ENCODE measurements at regions of chr1 and their contacts with region 1.

Region 1: GRCh38 chr1:12177999-12178441 is 11.2 kb downstream of the TNFRSF1B start:
- DNase-seq: peak; percentile 85 to 98 (median 90)
- H3K4me3 ChIP-seq: peak overlapping the region; percentile 63
- H3K4me3 Mint-ChIP-seq: peak overlapping the region; percentile 67 to 93 (median 85)
- H3K27ac ChIP-seq: peak overlapping the region; percentile 76
- H3K27ac Mint-ChIP-seq: peak overlapping the region; percentile 97 to 100 (median 100)
- H3K4me1 ChIP-seq: peaks cover 82% of the 10 kb centered on the region
- H3K4me1 Mint-ChIP-seq: peaks cover 81 to 94% (median 84%) of the 10 kb centered on the region in 3 donors
- H3K27me3 ChIP-seq: no peaks in the 10 kb centered on the region
- H3K27me3 Mint-ChIP-seq: peaks cover 0 to 10% of the 10 kb centered on the region in 2 donors

Region 2: GRCh38 chr1:11822096-11822495 is 355.9 kb before region 1 on chr1:
- CTCF ChIA-PET with region 1: no interaction called
- POLR2A ChIA-PET with region 1: no interaction called
- DNase-seq: no peak
- H3K4me3 ChIP-seq: no peak overlapping the region
- H3K4me3 Mint-ChIP-seq: no peak overlapping the region
- H3K27ac ChIP-seq: no peak overlapping the region
- H3K27ac Mint-ChIP-seq: peak overlapping the region in 1 of 8 donors; percentile 21
- H3K4me1 ChIP-seq: no peaks in the 10 kb centered on the region
- H3K4me1 Mint-ChIP-seq: no peaks in the 10 kb centered on the region
- H3K27me3 ChIP-seq: no peaks in the 10 kb centered on the region
- H3K27me3 Mint-ChIP-seq: no peaks in the 10 kb centered on the region

Region 3: DNA sequence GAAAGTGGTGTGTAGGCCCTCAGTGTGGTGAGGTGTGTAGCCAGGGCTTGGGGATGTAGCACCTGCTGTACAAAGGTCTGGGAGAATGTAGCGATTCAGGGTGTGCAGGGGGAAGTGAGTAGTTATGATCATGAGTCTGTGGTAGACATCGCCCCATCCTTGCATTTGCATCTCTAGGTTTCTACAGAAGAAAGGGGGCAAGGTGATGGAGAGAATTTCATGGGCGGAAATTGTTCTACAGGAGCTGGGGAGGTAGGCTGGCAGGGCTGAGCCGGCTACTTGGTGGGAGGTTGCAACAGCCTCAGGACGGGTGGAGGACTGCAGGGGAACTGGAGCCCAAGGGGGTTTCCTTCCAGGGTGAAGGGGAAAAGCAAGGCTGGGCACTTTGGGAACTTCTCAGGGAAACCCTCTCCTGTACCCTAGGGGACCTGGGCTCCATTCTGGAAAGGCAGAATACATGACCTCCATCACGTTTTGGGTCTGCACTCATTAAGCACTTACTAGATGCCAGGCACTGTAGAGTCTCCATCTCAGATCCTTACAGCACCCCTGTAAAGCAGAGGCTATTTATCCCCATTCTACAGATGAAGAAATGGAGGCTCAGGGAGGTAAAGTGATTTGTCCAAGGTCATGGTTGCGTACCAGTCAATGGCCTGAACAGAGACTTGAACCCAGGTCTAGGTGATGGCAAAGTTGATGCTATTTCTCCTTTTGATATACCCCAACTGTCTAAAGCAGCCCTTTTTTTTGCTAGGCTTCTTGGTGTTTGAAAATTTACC is 25.7 kb before region 1 on chr1:
- CTCF ChIA-PET with region 1: interaction called, 24 read pairs
- POLR2A ChIA-PET with region 1: interaction called, 38 read pairs
- DNase-seq: no peak
- H3K4me3 ChIP-seq: no peak overlapping the region
- H3K4me3 Mint-ChIP-seq: peak overlapping the region; percentile 3 to 82 (median 78)
- H3K27ac ChIP-seq: peak overlapping the region; percentile 6
- H3K27ac Mint-ChIP-seq: peak overlapping the region; percentile 89 to 99 (median 98)
- H3K4me1 ChIP-seq: peaks cover 70% of the 10 kb centered on the region
- H3K4me1 Mint-ChIP-seq: peaks cover 78 to 88% (median 80%) of the 10 kb centered on the region in 3 donors
- H3K27me3 ChIP-seq: no peaks in the 10 kb centered on the region
- H3K27me3 Mint-ChIP-seq: no peaks in the 10 kb centered on the region

Region 4: GRCh38 chr1:12161662-12162458 is 16.2 kb before region 1 on chr1:
- CTCF ChIA-PET with region 1: interaction called, 13 read pairs
- POLR2A ChIA-PET with region 1: interaction called, 18 read pairs
- DNase-seq: peak in 4 of 5 donors; percentile 71 to 91 (median 78)
- H3K4me3 ChIP-seq: peak overlapping the region; percentile 46
- H3K4me3 Mint-ChIP-seq: peak overlapping the region; percentile 72 to 83 (median 76)
- H3K27ac ChIP-seq: peak overlapping the region; percentile 77
- H3K27ac Mint-ChIP-seq: peak overlapping the region; percentile 92 to 98 (median 96)
- H3K4me1 ChIP-seq: peaks cover 73% of the 10 kb centered on the region
- H3K4me1 Mint-ChIP-seq: peaks cover 73 to 87% (median 78%) of the 10 kb centered on the region in 3 donors
- H3K27me3 ChIP-seq: no peaks in the 10 kb centered on the region
- H3K27me3 Mint-ChIP-seq: no peaks in the 10 kb centered on the region

Region 5: GRCh38 chr1:12166834-12167492 is 11.1 kb before region 1 on chr1 and contains the start of gene TNFRSF1B:
- CTCF ChIA-PET with region 1: interaction called, 14 read pairs
- POLR2A ChIA-PET with region 1: interaction called, 18 read pairs
- DNase-seq: peak; percentile 49 to 78 (median 68)
- H3K4me3 ChIP-seq: peak within 1 kb of the TSS; percentile 91
- H3K4me3 Mint-ChIP-seq: peak within 1 kb of the TSS; percentile 94 to 100 (median 99)
- H3K27ac ChIP-seq: peak within 1 kb of the TSS; percentile 95
- H3K27ac Mint-ChIP-seq: peak within 1 kb of the TSS; percentile 90 to 100 (median 99)
- H3K4me1 ChIP-seq: peaks cover 67% of the 10 kb centered on the region
- H3K4me1 Mint-ChIP-seq: peaks cover 71 to 84% (median 76%) of the 10 kb centered on the region in 3 donors
- H3K27me3 ChIP-seq: no peaks in the 10 kb centered on the region
- H3K27me3 Mint-ChIP-seq: peaks cover 0 to 2% of the 10 kb centered on the region in 2 donors
- total RNA-seq, gene TNFRSF1B: 169 to 174 TPM